ENCODE measurements at regions of chr17 and their contacts with region 1.

Region 1: DNA sequence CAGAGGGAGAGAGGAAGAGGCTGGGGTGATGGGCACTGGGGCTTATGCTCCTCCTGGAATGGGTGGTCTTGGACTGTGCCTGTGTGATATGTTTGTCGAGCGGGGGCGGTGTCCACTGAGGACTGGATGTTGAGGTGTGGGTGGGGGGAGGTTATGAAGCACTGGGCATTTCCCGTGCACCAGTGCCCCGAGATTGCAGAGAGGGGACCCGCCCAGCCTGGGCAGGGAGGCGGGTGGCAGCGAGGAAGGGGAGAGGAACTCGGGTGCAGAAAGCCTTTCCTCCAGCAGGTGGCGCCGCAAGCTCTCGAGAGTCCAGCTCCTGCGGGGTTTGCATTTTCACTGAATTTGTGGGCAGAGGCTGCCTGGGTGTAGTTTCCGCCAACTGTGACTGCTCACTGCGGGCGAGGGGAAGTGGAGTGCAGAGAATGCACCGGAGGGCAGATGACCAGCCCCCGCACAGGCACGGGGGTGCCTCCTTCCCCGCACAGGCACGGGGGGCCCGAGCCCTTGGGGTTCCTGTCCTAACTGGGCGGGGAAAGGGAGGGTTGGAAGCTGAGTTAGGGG is 190.6 kb downstream of the SEC14L1 start:
- DNase-seq: peak; percentile 83 to 97
- ATAC-seq: peak; percentile 76 to 87
- H3K4me3 ChIP-seq: no peak overlapping the region
- H3K27ac ChIP-seq: peak overlapping the region; percentile 50 to 83
- H3K4me1 ChIP-seq: peaks cover 56% of the 10 kb centered on the region
- CTCF ChIP-seq: peak; percentile 97
- EP300 ChIP-seq: no peak
- POLR2A ChIP-seq: no peak
- RAD21 ChIP-seq: peak; percentile 98 to 99

Region 2: GRCh38 chr17:77245162-77245926 is 86.0 kb before region 1 on chr17:
- CTCF ChIA-PET with region 1: no interaction called
- POLR2A ChIA-PET with region 1: no interaction called
- DNase-seq: no peak
- ATAC-seq: no peak
- H3K4me3 ChIP-seq: no peak overlapping the region
- H3K27ac ChIP-seq: no peak overlapping the region
- H3K4me1 ChIP-seq: peaks cover 3% of the 10 kb centered on the region; the same call in 1 of the 3 replicates
- CTCF ChIP-seq: no peak
- EP300 ChIP-seq: no peak
- POLR2A ChIP-seq: no peak
- RAD21 ChIP-seq: no peak

Region 3: DNA sequence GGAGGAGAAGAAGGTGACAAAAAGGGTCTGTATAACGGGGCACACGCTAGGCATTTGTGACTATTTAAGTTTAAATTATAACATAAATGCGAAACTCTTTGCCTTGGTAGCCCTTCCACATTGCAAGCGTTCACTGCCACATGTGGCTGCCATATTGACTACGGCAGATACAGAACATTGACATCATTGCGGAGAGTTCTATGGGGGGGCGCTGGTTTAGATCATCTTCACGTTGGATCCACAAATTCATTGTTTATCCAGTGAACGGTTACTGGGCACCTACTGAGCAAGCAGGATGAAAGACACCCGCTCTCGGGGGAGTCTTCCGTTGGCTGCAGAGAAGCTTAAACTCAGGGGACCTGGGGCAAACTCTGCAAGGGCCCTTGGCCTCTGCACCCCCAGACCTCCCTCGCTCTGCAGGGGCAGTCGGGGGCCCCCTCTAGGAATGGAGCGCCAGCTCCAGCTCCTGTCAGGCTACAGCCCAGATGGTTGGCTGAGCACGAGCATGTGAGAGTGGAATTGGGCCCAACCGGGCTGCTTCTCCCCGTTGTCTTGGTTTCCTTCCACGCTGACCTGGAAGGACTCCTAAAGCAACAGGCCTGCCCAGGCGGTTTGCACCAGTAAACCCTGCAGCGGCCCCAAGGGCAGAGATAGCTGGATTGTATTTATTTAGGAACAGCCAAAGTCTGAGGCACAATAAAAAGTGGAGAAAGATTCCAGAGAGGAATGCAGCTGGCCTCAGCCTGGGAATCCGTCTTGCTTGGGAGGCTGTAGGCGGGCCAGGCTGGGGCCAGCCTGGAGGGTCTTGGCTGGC is 18.4 kb before region 1 on chr17:
- CTCF ChIA-PET with region 1: interaction called, 12 read pairs
- POLR2A ChIA-PET with region 1: no interaction called
- DNase-seq: no peak
- ATAC-seq: no peak
- H3K4me3 ChIP-seq: no peak overlapping the region
- H3K27ac ChIP-seq: peak overlapping the region in 1 of 2 experiments; percentile 26; a peak in 1 of 6 replicates
- H3K4me1 ChIP-seq: peaks cover 51% of the 10 kb centered on the region
- CTCF ChIP-seq: no peak
- EP300 ChIP-seq: no peak
- POLR2A ChIP-seq: no peak
- RAD21 ChIP-seq: no peak

Region 4: DNA sequence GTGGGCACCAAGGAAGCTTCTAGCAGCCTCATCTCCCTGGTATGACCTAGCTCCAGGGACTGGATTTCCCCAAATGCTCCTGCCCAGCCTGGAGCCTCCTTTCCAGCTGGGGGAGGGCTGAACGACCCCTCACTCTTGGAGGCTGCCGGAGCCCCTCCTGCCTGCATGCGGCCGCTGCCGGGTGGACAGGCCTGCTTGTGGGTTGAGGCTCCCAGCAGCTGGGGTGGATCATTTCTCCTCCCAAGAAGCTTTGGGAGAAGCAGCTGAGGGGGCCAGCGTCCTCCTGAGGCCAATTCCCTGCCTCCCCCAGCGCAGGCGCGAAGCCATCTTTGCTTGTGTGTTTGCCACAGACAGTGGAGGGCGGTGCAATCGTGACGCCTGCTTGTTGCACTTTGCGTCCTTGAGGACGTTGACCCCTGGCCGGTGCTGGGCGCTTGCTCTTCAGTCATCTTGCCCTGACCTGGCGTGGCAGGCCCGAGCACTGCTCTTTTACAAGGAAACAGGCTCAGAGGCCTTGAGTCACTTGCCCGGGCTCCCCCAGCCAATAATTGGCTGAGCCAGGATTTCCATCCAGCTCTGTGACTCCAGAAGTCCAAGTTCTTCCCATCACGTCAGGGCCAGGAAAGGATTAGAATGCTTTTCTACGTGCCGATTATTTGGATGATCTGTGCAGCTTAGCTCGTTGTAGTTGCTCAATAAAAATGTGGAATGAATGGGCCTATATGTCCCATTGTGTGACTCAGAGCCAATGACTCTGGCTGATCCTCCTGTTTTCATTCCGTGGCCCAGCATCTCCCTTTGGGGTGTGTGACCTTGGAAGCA is 23.2 kb after region 1 on chr17:
- CTCF ChIA-PET with region 1: interaction called, 62 read pairs
- POLR2A ChIA-PET with region 1: no interaction called
- DNase-seq: peak; percentile 65 to 66
- ATAC-seq: peak; percentile 49 to 60
- H3K4me3 ChIP-seq: no peak overlapping the region
- H3K27ac ChIP-seq: peak overlapping the region; percentile 42 to 82; a peak in 5 of 6 replicates
- H3K4me1 ChIP-seq: peaks cover 61% of the 10 kb centered on the region
- CTCF ChIP-seq: no peak
- EP300 ChIP-seq: no peak
- POLR2A ChIP-seq: no peak
- RAD21 ChIP-seq: no peak

Region 5: GRCh38 chr17:77391668-77392375 is 60.4 kb after region 1 on chr17:
- CTCF ChIA-PET with region 1: interaction called, 22 read pairs
- POLR2A ChIA-PET with region 1: no interaction called
- DNase-seq: peak; percentile 54 to 74
- ATAC-seq: peak; percentile 31 to 68
- H3K4me3 ChIP-seq: 0 out of 3 replicates have a peak overlapping the region, but pooled peaks have one; percentile 2
- H3K27ac ChIP-seq: peak overlapping the region; percentile 85 to 87
- H3K4me1 ChIP-seq: peaks cover 72% of the 10 kb centered on the region
- CTCF ChIP-seq: no peak
- EP300 ChIP-seq: no peak
- POLR2A ChIP-seq: no peak
- RAD21 ChIP-seq: no peak

Region 6: GRCh38 chr17:77429919-77430752 is 98.8 kb after region 1 on chr17:
- CTCF ChIA-PET with region 1: interaction called, 198 read pairs
- POLR2A ChIA-PET with region 1: no interaction called
- DNase-seq: peak; percentile 84 to 88
- ATAC-seq: peak; percentile 28 to 58
- H3K4me3 ChIP-seq: no peak overlapping the region
- H3K27ac ChIP-seq: peak overlapping the region; percentile 75 to 95
- H3K4me1 ChIP-seq: peaks cover 60% of the 10 kb centered on the region
- CTCF ChIP-seq: peak; percentile 81
- EP300 ChIP-seq: 0 out of 5 replicates have a peak, but pooled peaks of 1 of the 2 experiments have one; percentile 0
- POLR2A ChIP-seq: no peak
- RAD21 ChIP-seq: peak; percentile 83 to 84

Region 7: DNA sequence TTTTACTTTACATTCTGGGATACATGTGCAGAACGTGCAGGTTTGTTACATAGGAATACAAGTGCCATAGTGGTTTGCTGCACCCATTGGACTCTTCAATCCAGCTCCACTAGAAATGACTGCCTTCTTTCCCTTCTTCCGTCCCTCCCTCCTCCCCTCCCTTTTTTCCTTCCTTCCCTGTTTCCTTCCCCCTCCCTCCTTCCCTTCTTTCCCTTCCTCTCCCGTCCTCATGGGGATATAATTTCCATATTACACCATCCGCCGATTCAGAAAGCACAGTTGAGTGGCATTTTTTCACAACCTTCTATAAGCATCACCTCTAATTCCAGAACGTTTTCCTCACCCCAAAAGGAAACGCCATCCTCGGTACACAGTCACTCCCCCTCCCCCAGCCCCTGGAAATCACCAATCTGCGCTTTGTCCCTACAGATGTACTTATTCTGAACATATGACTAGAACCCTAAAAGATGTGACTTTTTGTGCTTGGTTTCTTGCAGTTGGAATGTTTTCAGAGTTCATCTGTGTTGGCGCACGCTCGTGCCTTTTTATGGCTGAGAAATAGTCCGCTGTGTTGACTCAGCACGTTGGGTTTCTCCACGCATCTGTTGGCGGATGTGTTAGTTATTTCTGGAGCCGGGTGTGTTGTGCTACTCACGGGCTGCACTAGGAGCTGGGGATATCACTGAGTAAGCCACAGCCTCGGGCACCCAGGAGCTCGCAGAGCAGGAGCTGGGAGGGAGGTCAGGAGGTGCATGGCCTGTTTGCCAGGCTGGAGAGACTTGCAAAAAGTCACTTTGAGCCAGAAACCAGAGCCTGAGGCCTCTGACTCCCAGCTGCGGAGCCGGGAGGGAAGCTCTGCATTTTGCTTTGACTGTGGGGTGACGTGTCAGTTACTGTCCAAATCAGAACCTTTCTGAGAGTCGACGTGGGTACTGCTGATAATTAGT is 145.8 kb after region 1 on chr17:
- CTCF ChIA-PET with region 1: interaction called, 20 read pairs
- POLR2A ChIA-PET with region 1: no interaction called
- DNase-seq: no peak
- ATAC-seq: no peak
- H3K4me3 ChIP-seq: no peak overlapping the region
- H3K27ac ChIP-seq: no peak overlapping the region
- H3K4me1 ChIP-seq: peaks cover 46% of the 10 kb centered on the region
- CTCF ChIP-seq: no peak
- EP300 ChIP-seq: no peak
- POLR2A ChIP-seq: no peak
- RAD21 ChIP-seq: no peak

Region 8: GRCh38 chr17:77507111-77507885 is 175.9 kb after region 1 on chr17:
- CTCF ChIA-PET with region 1: interaction called, 22 read pairs
- POLR2A ChIA-PET with region 1: no interaction called
- DNase-seq: no peak
- ATAC-seq: peak; percentile 42 to 43; a peak in 5 of 6 replicates
- H3K4me3 ChIP-seq: no peak overlapping the region
- H3K27ac ChIP-seq: peak overlapping the region; percentile 25 to 65; a peak in 4 of 6 replicates
- H3K4me1 ChIP-seq: peaks cover 13% of the 10 kb centered on the region
- CTCF ChIP-seq: no peak
- EP300 ChIP-seq: no peak
- POLR2A ChIP-seq: no peak
- RAD21 ChIP-seq: peak in 1 of 2 experiments; percentile 19; a peak in 2 of 5 replicates

Measured in A549 (cell line).